ENCODE measurements at regions of chr22 and their contacts with region 1.

Region 1: DNA sequence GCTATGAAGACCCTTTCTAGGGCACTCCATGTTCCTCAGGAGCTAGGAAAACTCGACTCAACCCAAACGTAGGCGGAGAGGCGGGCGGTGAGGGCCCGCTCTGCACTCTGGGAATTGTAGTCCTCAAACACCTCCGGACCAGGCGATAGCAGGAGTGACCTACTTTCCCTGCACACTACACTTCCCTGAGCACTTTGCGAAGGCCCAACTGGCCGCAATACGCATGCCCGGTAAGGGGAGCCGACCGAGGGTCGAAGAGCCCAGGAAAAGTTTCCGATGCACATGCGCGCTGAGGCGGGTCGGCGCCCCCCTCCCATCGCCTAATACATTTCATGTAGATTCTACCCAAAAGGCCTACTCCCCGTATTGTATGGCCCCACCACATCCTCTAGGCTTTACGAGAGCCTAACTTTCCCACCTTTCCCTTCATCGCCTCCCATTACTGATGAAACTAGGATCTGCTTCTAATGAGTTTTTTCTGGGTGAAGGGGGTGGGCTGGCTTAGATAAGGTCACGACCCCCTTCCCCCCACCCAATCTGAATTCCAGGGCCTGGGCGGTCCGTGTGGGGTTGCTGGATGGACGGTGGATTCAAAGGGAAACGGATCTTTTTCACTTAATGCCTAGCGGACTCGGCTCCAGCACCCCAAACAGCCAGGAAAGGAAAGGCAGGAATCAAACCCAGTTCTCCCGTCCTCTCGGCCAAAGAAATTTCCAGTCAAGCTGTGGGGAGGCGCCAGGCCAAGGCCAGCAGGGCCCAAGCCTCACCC is 2.1 kb downstream of the TOB2 start:
- DNase-seq: peak; percentile 94
- ATAC-seq: peak; percentile 50 to 65

Region 2: GRCh38 chr22:41381329-41382097 is 63.0 kb before region 1 on chr22 and contains the start of gene TEF:
- intact Hi-C with region 1: no loop called
- DNase-seq: peak; percentile 99
- ATAC-seq: peak; percentile 87 to 95
- total RNA-seq, gene TEF: 14.0 to 24.5 TPM

Region 3: GRCh38 chr22:41403532-41404318 is 40.8 kb before region 1 on chr22:
- intact Hi-C with region 1: loop called in 1 of 2 experiments (anchors 2 kb)
- DNase-seq: peak; percentile 92
- ATAC-seq: peak; percentile 87 to 95

Region 4: GRCh38 chr22:41417622-41418390 is 26.7 kb before region 1 on chr22:
- intact Hi-C with region 1: loop called in 1 of 2 experiments (anchors 2 kb)
- DNase-seq: peak; percentile 91
- ATAC-seq: peak; percentile 67 to 83